PC-9 (cell line): ENCODE measurements at regions of chr12 and their contacts with region 1.

Region 1: DNA sequence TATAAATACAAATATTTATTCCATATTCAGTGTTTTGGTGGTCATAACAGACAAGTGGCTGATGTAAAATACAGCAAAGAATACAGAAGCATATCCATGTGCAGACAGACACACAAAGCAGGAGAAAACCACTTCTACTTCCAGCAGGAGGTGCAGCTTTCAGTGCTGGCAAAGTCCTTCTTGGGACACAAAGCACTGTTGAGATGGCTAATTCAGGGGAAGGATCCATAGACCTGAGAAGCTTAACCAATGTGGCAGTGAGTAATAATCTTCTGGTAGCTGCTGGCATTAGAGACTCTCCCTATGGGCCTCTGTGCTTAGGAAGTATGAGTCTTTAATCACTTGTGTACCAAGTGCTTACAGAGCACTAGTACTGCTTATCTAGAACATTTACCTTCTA is 26.8 kb downstream of the AMN1 start:
- DNase-seq: no peak
- H3K4me3 ChIP-seq: no peak overlapping the region
- H3K27ac ChIP-seq: no peak overlapping the region
- H3K4me1 ChIP-seq: no peaks in the 10 kb centered on the region
- H3K27me3 ChIP-seq: no peaks in the 10 kb centered on the region
- CTCF ChIP-seq: no peak

Region 2: DNA sequence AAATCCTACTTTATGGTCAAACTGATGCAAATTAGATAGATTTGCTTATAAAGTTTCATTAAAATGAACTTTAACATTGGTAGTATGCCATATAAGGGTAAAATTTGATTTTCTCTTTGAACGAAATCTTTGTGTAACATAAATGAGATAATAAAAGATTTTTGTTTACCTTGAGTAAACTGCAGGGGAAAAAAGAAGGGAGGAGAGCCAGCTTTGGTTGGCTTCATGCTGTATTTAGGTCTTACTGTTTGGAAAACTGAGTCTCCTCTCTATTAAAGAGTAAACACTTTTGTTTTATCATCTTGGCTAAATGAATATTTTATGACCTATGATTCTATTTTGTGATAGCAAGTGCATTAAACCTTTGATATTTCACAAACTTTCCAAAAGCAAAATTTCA is 1273.9 kb before region 1 on chr12:
- CTCF ChIA-PET with region 1: no interaction called
- POLR2A ChIA-PET with region 1: no interaction called
- intact Hi-C with region 1: no loop called
- DNase-seq: no peak
- H3K4me3 ChIP-seq: no peak overlapping the region
- H3K27ac ChIP-seq: no peak overlapping the region
- H3K4me1 ChIP-seq: no peaks in the 10 kb centered on the region
- H3K27me3 ChIP-seq: no peaks in the 10 kb centered on the region
- CTCF ChIP-seq: no peak

Region 3: GRCh38 chr12:31722580-31722979 is 20.5 kb after region 1 on chr12:
- CTCF ChIA-PET with region 1: no interaction called
- POLR2A ChIA-PET with region 1: no interaction called
- intact Hi-C with region 1: no loop called
- DNase-seq: no peak
- H3K4me3 ChIP-seq: no peak overlapping the region
- H3K27ac ChIP-seq: no peak overlapping the region
- H3K4me1 ChIP-seq: no peaks in the 10 kb centered on the region
- H3K27me3 ChIP-seq: no peaks in the 10 kb centered on the region
- CTCF ChIP-seq: no peak

Region 4: GRCh38 chr12:31865023-31865422 is 163.0 kb after region 1 on chr12:
- CTCF ChIA-PET with region 1: interaction called, 10 read pairs
- POLR2A ChIA-PET with region 1: no interaction called
- intact Hi-C with region 1: no loop called
- DNase-seq: no peak
- H3K4me3 ChIP-seq: no peak overlapping the region
- H3K27ac ChIP-seq: no peak overlapping the region
- H3K4me1 ChIP-seq: no peaks in the 10 kb centered on the region
- H3K27me3 ChIP-seq: no peaks in the 10 kb centered on the region
- CTCF ChIP-seq: no peak